GM18951 (cell line): ENCODE measurements at regions of chr1 and their contacts with region 1.

Region 1: DNA sequence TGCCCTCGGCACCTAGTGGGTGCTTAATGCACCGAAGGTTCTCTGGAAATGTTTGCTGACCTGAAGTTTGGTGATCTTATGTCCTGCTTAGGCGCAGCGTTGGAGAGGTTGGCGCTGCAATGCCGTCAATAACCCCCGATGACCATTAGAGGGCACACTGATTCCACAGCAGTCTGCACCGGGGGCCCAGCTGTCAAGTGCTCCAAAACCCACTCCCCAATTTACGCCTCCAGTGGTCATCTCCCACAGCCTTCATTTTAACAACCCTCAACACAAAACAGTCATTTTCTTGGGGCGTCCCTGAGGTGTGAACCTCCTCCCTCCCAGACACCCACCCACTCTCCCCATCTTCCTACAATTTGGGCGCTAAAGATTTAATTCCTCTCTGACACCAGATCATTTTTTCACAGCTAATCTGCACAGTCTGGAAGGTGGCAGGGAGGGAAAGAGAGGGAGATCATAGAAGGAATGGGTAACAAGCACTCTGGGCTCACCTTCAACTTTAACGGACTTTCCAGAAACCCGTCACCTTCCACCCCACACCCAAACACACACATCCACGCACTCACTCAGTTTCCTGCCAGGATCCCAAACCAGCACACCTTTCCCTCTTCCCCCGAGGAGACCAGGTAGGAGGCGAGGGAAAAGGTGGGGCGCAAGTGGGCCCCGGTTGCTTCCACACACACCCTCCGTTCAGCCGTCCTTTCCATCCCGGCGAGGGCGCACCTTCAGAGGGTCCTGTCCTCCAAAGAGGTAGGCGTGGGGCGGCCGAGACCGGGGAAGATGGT is 576 bp upstream of the NPR1 start:
- POLR2A ChIP-seq: no peak

Region 2: DNA sequence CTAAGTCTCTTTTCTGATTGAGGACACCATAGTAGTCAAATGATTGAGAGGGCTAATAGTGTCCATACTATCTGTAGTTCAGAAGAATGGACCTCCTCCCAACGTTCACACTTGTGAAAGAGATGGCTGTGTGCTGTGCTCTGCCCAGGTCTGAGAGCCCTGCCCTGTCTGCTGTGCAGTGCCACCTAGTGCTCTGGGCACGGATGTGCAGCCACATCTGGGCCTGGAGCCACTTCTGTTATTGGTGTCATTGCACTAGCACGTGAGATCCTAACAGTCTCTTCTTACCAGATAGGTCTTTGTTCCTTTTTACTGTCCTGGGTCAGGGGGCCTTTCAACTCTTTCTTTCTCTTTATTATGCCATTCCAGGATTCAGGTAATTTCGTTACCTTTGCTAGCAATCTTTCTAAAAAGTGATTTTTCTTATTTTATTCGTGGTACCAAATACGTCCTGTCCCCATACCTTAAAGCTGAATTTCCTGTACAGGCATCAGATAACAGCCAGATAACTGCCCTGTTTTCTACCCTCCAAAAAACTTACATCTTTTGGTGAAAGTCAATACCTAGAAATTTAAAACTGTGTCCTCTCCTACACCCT is 71.6 kb after region 1 on chr1:
- in situ Hi-C with region 1: loop called (anchors 5 kb)
- POLR2A ChIP-seq: no peak